ENCODE measurements at regions of chr2 and their contacts with region 1.

Region 1: DNA sequence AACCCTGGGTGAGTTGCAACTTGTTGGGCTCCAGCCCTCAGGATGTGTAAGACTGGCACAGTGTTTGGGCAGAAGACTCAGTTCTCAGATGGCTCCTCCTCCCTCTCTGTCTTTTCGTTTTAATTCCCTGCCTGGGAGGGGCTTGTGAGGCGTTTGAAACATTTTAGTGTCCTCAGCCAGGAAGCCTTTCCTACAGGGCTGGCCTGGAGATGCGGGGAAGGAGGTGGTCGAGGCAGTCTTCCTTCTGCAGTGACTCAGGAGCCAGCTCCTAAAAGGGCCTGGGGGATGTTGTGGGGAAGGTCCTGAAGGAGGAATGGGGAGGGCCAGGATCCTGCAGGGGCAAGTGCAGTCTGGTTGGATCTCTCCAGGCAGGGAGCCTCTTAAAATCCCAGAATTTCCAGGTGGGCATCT is 22.1 kb upstream of the IGFBP5 start:
- DNase-seq: no peak
- ATAC-seq: no peak
- H3K4me3 ChIP-seq: no peak overlapping the region
- H3K27ac ChIP-seq: no peak overlapping the region
- H3K4me1 ChIP-seq: peaks cover 7% of the 10 kb centered on the region
- H3K27me3 ChIP-seq: no peaks in the 10 kb centered on the region
- CTCF ChIP-seq: no peak

Region 2: GRCh38 chr2:216758256-216759155 is 41.0 kb after region 1 on chr2:
- intact Hi-C with region 1: loop called in 1 of 2 experiments (anchors 5 kb)
- DNase-seq: no peak
- ATAC-seq: no peak
- H3K4me3 ChIP-seq: no peak overlapping the region
- H3K27ac ChIP-seq: no peak overlapping the region
- H3K4me1 ChIP-seq: peaks cover 8% of the 10 kb centered on the region
- H3K27me3 ChIP-seq: no peaks in the 10 kb centered on the region
- CTCF ChIP-seq: no peak